ENCODE measurements at regions of chr19 and their contacts with region 1.

Region 1: DNA sequence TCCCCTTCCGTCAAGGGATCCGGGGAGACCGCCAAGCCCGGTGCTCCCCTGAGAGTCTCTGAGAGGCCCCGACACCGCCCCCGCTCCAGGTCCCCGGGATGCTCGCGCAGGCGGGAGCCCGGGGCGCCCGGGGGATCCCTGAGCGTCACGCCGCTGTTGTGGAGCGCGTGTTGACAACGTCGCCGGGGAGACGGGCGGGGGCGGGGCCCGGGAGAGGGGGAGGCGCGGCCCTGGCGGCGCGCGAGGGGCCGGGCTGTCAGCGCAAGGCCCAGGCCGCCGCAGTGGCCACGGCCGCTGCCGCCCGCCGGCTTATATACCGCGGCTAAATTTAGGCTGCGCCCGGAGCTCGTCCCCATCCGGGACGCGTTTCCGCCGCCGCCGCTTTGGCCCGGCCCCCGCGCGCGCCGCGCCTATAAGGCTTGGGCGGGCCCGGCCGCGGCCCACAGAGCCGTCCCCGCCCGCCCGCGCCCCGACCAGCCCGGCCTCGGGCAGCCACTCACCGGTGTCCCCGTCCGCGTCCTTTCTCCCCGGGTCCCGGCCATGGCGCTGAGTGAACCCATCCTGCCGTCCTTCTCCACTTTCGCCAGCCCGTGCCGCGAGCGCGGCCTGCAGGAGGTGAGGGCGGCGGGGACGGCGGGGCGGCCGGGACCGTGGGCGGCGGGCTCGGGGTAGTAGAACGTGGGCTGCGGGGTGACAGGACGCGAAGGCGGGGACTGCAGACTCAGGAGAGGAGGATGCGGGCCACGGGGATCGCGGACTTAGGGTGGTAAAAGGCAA is at the start of gene KLF2:
- DNase-seq: no peak
- H3K4me3 ChIP-seq: peak within 1 kb of the TSS; percentile 68 to 85
- H3K27ac ChIP-seq: peak within 1 kb of the TSS; percentile 97
- H3K4me1 ChIP-seq: peaks cover 42% of the 10 kb centered on the region
- H3K27me3 ChIP-seq: no peaks in the 10 kb centered on the region
- CTCF ChIP-seq: no peak
- POLR2A ChIP-seq: peak in 1 of 2 donors; percentile 91
- total RNA-seq, gene KLF2: 252 TPM

Region 2: GRCh38 chr19:16259385-16260159 is 65.0 kb before region 1 on chr19:
- intact Hi-C with region 1: loop called (anchors 10 kb)
- DNase-seq: no peak
- H3K4me3 ChIP-seq: no peak overlapping the region
- H3K27ac ChIP-seq: peak overlapping the region; percentile 63
- H3K4me1 ChIP-seq: peaks cover 9% of the 10 kb centered on the region
- H3K27me3 ChIP-seq: no peaks in the 10 kb centered on the region
- CTCF ChIP-seq: no peak
- POLR2A ChIP-seq: no peak

Region 3: GRCh38 chr19:16283210-16284061 is 41.1 kb before region 1 on chr19:
- intact Hi-C with region 1: loop called (anchors 2 kb)
- DNase-seq: peak in 1 of 2 donors; percentile 94
- H3K4me3 ChIP-seq: peak overlapping the region; percentile 14 to 30
- H3K27ac ChIP-seq: peak overlapping the region; percentile 87
- H3K4me1 ChIP-seq: peaks cover 47% of the 10 kb centered on the region
- H3K27me3 ChIP-seq: no peaks in the 10 kb centered on the region
- CTCF ChIP-seq: no peak
- POLR2A ChIP-seq: peak in 1 of 2 donors; percentile 34

Region 4: DNA sequence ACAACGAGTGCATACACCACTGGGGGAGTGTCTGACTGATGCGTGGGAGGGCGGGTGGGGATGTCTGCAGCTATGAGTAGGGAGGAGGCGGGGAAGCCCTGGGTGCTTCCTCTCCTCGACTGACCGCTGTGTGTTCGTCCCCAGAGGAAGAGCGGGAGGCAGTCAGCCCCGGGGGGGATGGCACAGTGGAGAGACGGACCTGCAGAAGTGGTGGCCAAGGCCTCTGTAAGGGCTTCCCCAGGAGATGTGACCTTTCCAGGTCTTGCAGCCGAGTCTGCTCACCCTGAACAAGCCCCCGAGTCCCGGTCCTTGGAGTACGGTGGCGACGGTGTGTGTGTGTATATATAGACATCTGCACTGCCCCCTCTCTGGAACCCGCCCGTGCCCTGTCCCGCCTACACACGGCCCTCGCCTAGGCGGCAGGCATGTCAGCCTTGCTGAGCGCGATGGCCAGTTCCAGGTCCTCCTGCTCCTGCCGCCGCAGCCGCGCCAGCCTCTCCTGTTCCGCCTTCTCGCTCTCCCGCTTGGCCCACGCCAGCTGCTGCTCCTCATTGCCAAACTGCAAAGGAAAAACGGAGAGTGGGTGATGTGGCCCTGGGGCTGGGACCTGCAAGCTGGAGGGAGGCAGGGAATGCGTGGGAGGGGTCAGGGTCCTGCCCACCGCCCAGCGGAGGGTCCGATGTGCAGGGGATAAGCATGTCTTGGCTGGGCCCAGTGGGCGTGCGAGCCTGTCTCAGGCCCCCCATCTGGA is 30.9 kb after region 1 on chr19:
- intact Hi-C with region 1: no loop called
- DNase-seq: no peak
- H3K4me3 ChIP-seq: peak overlapping the region; percentile 6 to 20
- H3K27ac ChIP-seq: no peak overlapping the region
- H3K4me1 ChIP-seq: peaks cover 11% of the 10 kb centered on the region
- H3K27me3 ChIP-seq: no peaks in the 10 kb centered on the region
- CTCF ChIP-seq: no peak
- POLR2A ChIP-seq: no peak

Region 5: DNA sequence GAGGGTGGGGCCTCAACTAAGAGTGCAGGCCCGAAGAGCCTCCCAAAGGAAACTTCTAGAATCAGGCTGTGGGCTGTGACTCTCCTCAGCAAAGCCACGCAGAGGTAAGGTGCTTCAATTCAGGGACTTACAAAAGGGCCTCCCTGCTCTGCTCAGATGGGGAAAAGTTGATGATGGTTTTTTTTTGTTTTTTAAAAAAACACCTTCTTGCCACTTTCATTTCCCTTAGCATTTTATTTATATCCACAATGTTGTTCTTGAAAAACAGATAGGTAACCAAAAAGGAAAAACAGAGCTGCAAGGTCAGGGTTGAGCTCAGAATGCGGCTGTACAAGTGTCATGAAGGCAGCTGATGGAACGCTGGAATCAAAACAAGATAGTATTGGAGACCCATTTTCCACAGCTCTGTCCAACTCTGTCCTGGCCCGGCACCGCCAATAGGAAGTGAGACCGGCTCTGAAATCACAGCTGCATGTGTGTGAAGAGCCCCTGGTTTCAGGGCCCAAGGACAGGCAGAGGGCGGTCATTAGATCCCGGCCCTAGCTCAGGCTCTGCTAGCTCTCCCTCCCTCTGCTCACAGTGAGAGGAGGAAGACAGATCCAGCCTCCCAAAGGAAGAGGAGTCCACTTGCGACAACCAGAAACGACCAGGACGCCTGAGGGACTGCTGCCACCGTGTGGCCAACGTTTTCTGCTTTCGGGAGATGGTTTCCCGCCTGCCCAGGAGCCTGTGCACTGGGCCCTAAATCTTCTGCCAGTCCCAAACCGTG is 58.4 kb after region 1 on chr19:
- intact Hi-C with region 1: loop called (anchors 5 kb)
- DNase-seq: no peak
- H3K4me3 ChIP-seq: no peak overlapping the region
- H3K27ac ChIP-seq: peak overlapping the region; percentile 77
- H3K4me1 ChIP-seq: peaks cover 22% of the 10 kb centered on the region
- H3K27me3 ChIP-seq: no peaks in the 10 kb centered on the region
- CTCF ChIP-seq: peak; percentile 54 to 87 (median 80)
- POLR2A ChIP-seq: no peak